Naive thymus-derived CD8-positive, alpha-beta T cell (primary cell): ENCODE measurements at regions of chr3 and their contacts with region 1.

Region 1: DNA sequence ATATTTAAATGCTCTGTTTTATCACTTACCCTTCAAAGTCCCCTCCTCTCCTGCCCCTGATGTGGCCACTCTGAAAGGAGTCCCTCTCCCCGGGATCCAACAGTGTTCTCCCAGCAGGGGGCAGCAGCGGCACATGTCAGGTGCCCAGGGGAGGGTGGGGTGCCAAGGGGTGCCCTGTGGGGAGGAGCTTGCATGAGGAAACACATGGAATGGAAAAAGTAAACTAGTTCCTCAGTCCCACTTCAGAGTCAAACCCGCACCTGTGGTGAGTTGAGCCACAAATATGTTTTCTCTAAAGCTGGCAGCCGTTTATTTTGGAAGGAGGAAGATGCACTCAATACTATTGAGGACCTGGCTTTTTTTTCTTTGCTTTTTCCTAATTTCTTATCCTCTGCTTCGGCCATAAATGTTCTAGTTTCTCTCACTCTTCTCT is 30.1 kb upstream of the NRROS start:
- DNase-seq: peak; percentile 84 to 97 (median 91)
- ATAC-seq: peak; percentile 94
- H3K4me3 Mint-ChIP-seq: peak overlapping the region; percentile 23 to 86 (median 68)
- H3K27ac Mint-ChIP-seq: peak overlapping the region; percentile 23 to 94 (median 78)
- H3K4me1 Mint-ChIP-seq: peaks cover 18 to 47% (median 40%) of the 10 kb centered on the region in 4 donors
- H3K27me3 Mint-ChIP-seq: no peaks in the 10 kb centered on the region

Region 2: GRCh38 chr3:196632046-196632751 is 22.8 kb after region 1 on chr3:
- POLR2A ChIA-PET with region 1: interaction called, 34 read pairs
- DNase-seq: peak; percentile 73 to 95 (median 84)
- ATAC-seq: peak; percentile 83 to 88
- H3K4me3 Mint-ChIP-seq: peak overlapping the region; percentile 80 to 96 (median 88)
- H3K27ac Mint-ChIP-seq: peak overlapping the region; percentile 58 to 99 (median 95)
- H3K4me1 Mint-ChIP-seq: peaks cover 16 to 65% (median 55%) of the 10 kb centered on the region in 4 donors
- H3K27me3 Mint-ChIP-seq: no peaks in the 10 kb centered on the region

Region 3: DNA sequence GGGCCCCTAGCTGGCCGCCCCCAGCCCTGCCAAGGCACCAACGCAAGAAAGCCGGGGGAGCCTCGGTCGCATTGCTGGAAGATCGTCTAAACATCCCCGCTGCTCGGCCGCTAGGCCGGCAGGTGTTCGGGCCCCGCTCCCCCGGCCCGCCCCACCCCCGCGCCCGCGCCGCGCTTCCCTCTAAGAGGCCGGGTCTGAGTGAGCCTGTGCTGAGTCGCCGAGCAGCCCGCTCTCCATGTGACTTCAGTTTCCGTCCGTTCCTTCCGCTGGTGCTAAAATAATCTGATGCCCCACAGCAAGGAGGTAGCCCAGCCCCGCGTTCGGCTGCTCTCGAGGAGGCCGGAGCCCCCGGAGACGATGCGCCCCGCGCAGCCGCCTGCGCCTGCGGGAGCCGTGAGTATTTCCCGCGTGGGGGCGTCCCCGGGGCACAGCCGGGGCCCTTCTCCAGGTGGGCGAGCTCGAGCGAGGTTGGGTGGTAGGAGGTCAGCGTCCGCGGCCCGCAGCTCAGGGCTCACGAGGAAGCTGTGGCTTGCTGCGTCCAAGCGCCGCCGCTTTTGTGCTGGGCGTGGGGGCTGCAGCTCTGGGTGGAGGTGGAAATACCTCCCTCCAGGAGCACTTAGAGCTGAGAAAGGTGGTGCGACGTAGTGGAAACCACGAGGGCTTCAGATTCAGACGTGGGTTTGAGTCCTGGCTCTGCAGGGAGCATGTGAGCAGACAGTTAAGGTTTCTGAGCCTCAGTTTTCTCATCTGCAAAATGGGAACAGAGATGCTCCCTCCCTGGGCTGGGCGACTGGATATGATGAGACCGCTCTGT is 30.3 kb after region 1 on chr3 and contains the start of gene NRROS:
- POLR2A ChIA-PET with region 1: interaction called, 10 read pairs
- DNase-seq: peak; percentile 15 to 72 (median 45)
- ATAC-seq: peak; percentile 70 to 73
- H3K4me3 Mint-ChIP-seq: peak within 1 kb of the TSS; percentile 72 to 90 (median 85)
- H3K27ac Mint-ChIP-seq: peak within 1 kb of the TSS; percentile 84 to 93 (median 88)
- H3K4me1 Mint-ChIP-seq: peaks cover 18 to 85% (median 69%) of the 10 kb centered on the region in 4 donors
- H3K27me3 Mint-ChIP-seq: no peaks in the 10 kb centered on the region
- polyA plus RNA-seq, gene NRROS: 0.29 to 0.92 (median 0.87) TPM

Region 4: GRCh38 chr3:196684548-196685407 is 75.4 kb after region 1 on chr3:
- POLR2A ChIA-PET with region 1: interaction called, 15 read pairs
- DNase-seq: peak; percentile 32 to 80 (median 60)
- ATAC-seq: peak; percentile 75 to 93
- H3K4me3 Mint-ChIP-seq: peak overlapping the region; percentile 50 to 76 (median 68)
- H3K27ac Mint-ChIP-seq: peak overlapping the region in 9 of 10 donors; percentile 36 to 93 (median 79)
- H3K4me1 Mint-ChIP-seq: peaks cover 3 to 28% (median 15%) of the 10 kb centered on the region in 4 donors
- H3K27me3 Mint-ChIP-seq: no peaks in the 10 kb centered on the region

Region 5: DNA sequence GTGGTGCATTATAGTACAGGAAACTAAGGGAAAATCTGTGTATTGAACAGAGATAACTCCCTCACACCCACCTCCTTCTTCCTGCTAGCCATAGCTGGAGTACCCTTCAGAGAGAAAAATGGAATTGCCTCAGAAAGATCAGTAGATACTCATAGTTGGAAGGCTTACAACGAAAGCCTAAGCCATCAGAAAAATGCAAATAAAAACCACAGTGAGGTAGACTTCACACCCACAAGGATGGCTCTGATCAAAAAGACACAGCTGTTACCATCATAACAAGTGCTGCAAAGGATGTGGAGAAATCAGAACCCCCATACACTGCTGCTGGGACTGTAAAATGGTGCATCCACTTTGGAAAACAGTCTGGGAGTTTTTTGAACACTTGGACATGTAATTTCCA is 696.5 kb after region 1 on chr3:
- POLR2A ChIA-PET with region 1: no interaction called
- DNase-seq: peak in 4 of 10 donors; percentile 19 to 67 (median 46)
- ATAC-seq: peak; percentile 46 to 98
- H3K4me3 Mint-ChIP-seq: no peak overlapping the region
- H3K27ac Mint-ChIP-seq: peak overlapping the region in 5 of 10 donors; percentile 2 to 50 (median 9)
- H3K4me1 Mint-ChIP-seq: peaks cover 5 to 14% (median 11%) of the 10 kb centered on the region in 4 donors
- H3K27me3 Mint-ChIP-seq: peaks cover 0 to 10% (median 2%) of the 10 kb centered on the region in 5 donors